Ovary (tissue), 10 donors: ENCODE measurements at regions of chr17 and their contacts with region 1.

Region 1: GRCh38 chr17:45376171-45377005 is 56.3 kb downstream of the ARHGAP27 start:
- DNase-seq: no peak
- H3K4me3 ChIP-seq: no peak overlapping the region
- H3K27ac ChIP-seq: no peak overlapping the region
- H3K4me1 ChIP-seq: peaks cover 4% of the 10 kb centered on the region
- H3K27me3 ChIP-seq: no peaks in the 10 kb centered on the region
- CTCF ChIP-seq: no peak
- EP300 ChIP-seq: no peak
- POLR2A ChIP-seq: no peak

Region 2: DNA sequence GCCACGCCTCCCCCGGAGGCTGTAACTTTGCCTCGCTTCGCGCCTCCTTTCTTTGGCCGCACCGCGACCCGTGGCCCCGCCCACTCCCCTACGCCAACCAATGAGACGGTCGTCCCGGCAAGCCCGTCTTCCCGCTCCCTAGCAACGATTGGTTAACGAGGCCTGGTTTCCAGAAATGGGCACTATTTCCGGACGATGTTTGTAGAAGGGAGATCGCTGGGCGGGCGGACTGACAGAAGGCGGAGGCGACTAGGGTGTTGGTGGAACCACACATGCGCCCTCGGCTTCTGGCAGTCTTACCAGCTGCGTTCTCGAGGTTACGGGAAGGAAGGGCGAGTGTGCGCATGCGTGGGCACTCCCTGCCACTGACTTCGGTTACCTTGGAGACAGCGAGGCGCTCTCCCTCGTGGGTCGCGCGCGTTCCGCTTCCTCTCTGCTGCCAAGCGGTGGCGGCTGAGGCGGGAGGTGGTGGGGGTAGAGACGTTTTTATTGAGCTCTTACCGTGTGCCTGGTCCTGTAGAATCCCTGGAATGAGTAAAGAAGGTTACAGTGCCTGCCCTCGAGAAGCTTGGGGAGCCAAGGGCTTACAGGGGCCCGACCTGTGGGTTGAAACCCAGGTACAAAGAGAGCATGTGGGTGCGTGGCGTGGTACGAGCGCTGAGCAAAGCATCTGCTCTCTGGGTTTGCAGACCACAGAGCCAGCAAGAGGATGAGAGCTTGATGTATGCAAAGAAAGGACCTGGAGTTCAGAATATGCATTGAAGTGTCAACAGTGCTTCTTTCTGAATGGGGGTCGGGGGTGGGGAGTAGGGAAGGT is 59.1 kb before region 1 on chr17:
- intact Hi-C with region 1: loop called in 1 of 4 experiments (anchors 5 kb)
- DNase-seq: peak; percentile 100
- H3K4me3 ChIP-seq: peak overlapping the region; percentile 69
- H3K27ac ChIP-seq: peak overlapping the region in 1 of 2 donors; percentile 92
- H3K4me1 ChIP-seq: peaks cover 2% of the 10 kb centered on the region
- H3K27me3 ChIP-seq: no peaks in the 10 kb centered on the region
- CTCF ChIP-seq: no peak
- EP300 ChIP-seq: peak; percentile 35
- POLR2A ChIP-seq: peak; percentile 48